Mammary epithelial cell (primary cell): ENCODE measurements at regions of chr16 and their contacts with region 1.

Region 1: DNA sequence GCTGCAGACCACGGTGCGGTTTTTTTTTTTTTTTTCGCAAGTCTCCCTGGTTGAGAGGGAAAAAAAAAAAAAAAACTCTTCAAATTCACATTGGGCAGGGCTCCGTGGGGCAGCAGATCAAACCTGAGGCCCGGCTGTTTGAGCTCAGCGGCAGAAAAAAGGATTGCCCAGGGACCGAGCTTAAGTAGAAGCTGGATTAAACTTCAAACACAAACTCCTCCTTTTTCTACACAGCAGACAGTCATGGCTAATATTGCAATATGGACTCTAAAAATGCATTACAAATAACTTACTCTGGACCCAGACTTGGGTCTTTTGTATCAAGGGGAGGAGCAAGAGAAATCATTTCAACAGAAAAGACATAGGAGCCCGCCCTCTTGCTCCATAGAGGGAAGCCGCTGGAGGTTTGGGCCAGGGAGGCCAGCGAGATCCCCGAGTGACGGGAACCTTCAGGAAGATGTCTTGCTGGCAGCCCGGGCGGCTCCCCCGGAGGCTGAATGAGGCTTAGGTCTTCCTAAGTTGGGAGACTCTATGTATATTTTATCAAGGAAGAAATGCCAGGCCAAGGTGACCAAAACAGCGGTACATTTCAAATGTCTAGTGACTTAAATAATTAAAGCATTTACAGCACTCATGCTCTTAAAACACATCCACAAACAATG is 167.7 kb downstream of the ZNF423 start:
- DNase-seq: no peak
- H3K4me3 ChIP-seq: no peak overlapping the region
- H3K27ac ChIP-seq: no peak overlapping the region
- H3K4me1 ChIP-seq: no peaks in the 10 kb centered on the region
- H3K27me3 ChIP-seq: no peaks in the 10 kb centered on the region
- CTCF ChIP-seq: no peak

Region 2: DNA sequence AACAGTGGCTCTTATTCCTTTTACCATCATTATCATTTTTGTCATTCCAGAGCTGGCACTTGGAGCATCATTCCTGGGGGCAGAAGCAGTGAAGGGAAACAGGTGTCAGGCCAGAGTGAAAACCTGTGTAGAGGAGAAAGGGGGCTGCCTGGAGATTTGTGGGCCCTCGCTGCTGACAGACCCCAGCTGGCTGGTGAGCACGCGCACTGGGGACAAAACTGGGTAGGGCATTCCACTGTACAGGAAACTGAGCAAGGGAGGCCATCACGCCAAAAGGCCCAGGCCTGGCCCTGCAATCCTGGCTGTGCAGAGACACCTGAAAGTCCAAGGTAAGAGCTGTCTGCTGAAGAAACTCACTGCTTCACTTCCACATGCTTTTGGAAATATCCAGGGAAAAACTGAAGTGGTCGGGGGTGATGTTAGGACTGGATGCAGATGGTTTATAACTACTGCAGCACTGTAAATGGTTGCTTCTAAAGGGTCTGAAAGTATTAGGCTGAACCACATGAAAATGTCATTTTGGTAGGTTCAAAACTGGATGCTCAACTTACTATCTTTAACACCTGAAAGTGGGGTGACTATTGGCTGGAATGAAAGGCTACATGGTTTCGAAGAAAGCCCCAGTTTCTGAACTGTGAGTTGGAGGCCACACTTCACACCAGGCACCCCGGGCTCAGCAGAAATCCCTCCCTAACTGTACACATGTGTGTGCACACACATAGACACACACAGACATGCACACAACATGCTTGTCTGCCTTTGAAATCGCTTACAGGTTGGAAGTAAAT is 89.6 kb before region 1 on chr16:
- CTCF ChIA-PET with region 1: no interaction called
- dilution Hi-C with region 1: no loop called
- in situ Hi-C with region 1: no loop called
- intact Hi-C with region 1: no loop called
- DNase-seq: no peak
- H3K4me3 ChIP-seq: no peak overlapping the region
- H3K27ac ChIP-seq: no peak overlapping the region
- H3K4me1 ChIP-seq: no peaks in the 10 kb centered on the region
- H3K27me3 ChIP-seq: no peaks in the 10 kb centered on the region
- CTCF ChIP-seq: no peak

Region 3: DNA sequence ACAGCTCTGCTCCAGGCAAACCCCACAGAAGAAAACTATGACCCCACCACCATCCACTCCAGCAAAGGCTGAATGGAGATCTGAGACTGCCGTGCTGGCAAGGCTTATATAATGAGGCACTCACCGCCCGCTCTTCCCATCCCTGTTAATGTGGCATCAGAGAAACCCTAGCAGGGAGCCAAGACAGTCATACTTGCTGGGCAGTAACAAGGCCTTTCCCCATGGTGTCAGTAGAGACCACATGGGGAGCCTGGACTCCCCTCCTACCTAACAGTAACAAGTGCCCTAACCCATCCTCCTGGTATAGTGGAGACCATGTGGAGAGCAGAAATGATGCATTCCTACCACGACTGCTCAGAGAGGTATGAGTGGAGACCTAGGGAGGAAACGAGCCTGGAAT is 79.4 kb before region 1 on chr16:
- CTCF ChIA-PET with region 1: interaction called, 14 read pairs
- dilution Hi-C with region 1: no loop called
- in situ Hi-C with region 1: no loop called
- intact Hi-C with region 1: no loop called
- DNase-seq: no peak
- H3K4me3 ChIP-seq: no peak overlapping the region
- H3K27ac ChIP-seq: no peak overlapping the region
- H3K4me1 ChIP-seq: no peaks in the 10 kb centered on the region
- H3K27me3 ChIP-seq: no peaks in the 10 kb centered on the region
- CTCF ChIP-seq: no peak

Region 4: GRCh38 chr16:49631187-49632041 is 56.8 kb before region 1 on chr16:
- CTCF ChIA-PET with region 1: no interaction called
- dilution Hi-C with region 1: no loop called
- in situ Hi-C with region 1: no loop called
- intact Hi-C with region 1: no loop called
- DNase-seq: no peak
- H3K4me3 ChIP-seq: no peak overlapping the region
- H3K27ac ChIP-seq: no peak overlapping the region
- H3K4me1 ChIP-seq: no peaks in the 10 kb centered on the region
- H3K27me3 ChIP-seq: no peaks in the 10 kb centered on the region
- CTCF ChIP-seq: no peak